PC-3 (cell line): ENCODE measurements at regions of chr20 and their contacts with region 1.

Region 1: GRCh38 chr20:57698117-57698866 is 11.5 kb downstream of the PMEPA1 start:
- DNase-seq: peak; percentile 100
- ATAC-seq: peak; percentile 73
- H3K4me3 ChIP-seq: peak overlapping the region; percentile 50
- H3K27ac ChIP-seq: peak overlapping the region; percentile 94
- H3K4me1 ChIP-seq: peaks cover 90% of the 10 kb centered on the region
- H3K27me3 ChIP-seq: no peaks in the 10 kb centered on the region
- CTCF ChIP-seq: no peak

Region 2: DNA sequence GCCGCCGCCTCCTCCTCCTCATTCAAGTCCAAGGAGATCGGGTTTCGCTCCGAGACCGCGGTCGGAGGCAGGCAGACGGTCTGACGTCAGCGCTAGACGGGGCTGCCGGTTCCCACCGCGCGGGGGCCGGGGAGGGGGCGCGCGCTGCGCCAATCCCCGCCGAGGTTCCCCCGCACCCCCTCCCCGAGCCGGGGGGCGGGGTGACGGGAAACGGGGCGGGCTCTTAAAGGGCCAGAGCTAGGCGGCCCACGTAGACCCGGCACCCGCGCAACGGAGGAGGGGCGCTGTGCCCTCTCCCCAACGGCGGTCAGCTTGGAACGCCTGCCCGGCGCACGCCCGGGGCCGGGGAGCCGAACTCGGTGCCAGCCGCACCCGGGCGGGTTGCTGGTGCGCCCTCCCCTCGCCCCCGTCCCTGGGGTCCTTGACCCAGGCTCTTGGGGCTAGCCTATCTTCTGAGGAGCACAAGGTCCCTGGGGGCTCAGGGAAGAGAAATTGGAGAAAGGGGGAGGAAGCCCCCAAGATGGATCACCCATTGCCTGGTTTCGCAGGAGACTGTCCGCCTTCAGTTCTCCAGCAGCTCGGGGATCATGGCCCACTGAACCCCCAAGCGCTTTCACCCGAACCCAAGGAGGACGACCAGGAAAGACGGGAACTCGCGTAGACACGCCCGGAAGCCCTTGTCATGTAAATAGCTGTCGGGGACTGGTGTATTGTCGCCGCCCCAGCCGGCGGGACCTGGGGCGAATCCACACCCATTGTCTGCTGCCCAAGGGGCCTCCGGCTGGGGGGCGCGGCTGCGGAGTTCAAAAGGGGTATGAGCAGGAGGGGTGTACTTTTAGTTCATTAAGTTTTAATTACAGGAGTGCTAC is 11.9 kb after region 1 on chr20 and contains the start of gene PMEPA1:
- CTCF ChIA-PET with region 1: interaction called, 4 read pairs
- POLR2A ChIA-PET with region 1: interaction called, 5 read pairs
- intact Hi-C with region 1: loop called (anchors 1 kb)
- DNase-seq: peak; percentile 99
- ATAC-seq: peak; percentile 66
- H3K4me3 ChIP-seq: peak within 1 kb of the TSS; percentile 98
- H3K27ac ChIP-seq: peak within 1 kb of the TSS; percentile 88
- H3K4me1 ChIP-seq: peaks cover 70% of the 10 kb centered on the region
- H3K27me3 ChIP-seq: no peaks in the 10 kb centered on the region
- CTCF ChIP-seq: peak; percentile 40; the same call in 1 of the 2 replicates
- total RNA-seq, gene PMEPA1: 21.9 and 29.3 TPM in 2 replicates

Region 3: GRCh38 chr20:57772276-57773030 is 74.2 kb after region 1 on chr20:
- CTCF ChIA-PET with region 1: interaction called, 3 read pairs
- POLR2A ChIA-PET with region 1: no interaction called
- intact Hi-C with region 1: loop called (anchors 1 kb)
- DNase-seq: peak; percentile 99
- ATAC-seq: peak; percentile 99
- H3K4me3 ChIP-seq: no peak overlapping the region
- H3K27ac ChIP-seq: peak overlapping the region; percentile 88
- H3K4me1 ChIP-seq: peaks cover 27% of the 10 kb centered on the region
- H3K27me3 ChIP-seq: no peaks in the 10 kb centered on the region
- CTCF ChIP-seq: no peak

Region 4: DNA sequence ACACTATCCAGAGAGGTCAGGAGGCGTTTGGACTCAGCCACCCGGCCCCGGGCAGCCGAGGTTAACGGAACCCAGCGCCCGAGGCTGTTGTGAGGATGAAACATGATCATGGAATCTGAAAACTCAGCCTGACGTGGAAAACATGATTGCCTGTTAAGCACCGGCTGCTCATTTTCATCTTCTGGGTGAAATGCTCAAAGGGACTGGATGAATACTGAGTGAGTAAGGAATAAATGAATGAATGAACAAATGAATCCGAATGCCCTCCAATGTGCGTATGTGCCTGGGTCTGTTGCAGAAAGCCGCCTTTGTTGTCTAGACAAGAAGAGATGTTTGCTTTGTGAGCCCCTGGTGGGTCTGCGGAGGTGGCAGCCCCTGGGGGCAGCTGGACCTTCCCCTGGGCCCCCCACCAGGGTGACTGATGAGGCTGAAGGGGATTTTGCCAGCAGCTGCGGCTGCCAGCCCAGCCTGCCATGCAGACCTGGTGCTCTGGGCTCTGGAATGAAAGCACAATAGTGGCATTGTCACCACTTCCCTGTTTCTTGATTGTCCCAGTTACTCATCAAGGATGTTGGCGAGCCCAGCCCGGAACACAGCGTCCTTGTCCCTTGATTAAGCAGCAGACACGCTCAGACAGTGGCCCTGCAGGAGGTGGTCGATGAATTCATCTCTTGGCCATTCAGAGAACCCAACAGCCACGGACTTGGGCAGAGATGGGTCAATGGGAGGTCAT is 319.1 kb after region 1 on chr20:
- CTCF ChIA-PET with region 1: no interaction called
- POLR2A ChIA-PET with region 1: no interaction called
- intact Hi-C with region 1: loop called (anchors 5 kb)
- DNase-seq: peak; percentile 98
- ATAC-seq: peak; percentile 88
- H3K4me3 ChIP-seq: peak overlapping the region; percentile 42; the same call in 1 of the 2 replicates
- H3K27ac ChIP-seq: peak overlapping the region; percentile 97
- H3K4me1 ChIP-seq: peaks cover 58% of the 10 kb centered on the region
- H3K27me3 ChIP-seq: no peaks in the 10 kb centered on the region
- CTCF ChIP-seq: no peak